ENCODE measurements at regions of chr13 and their contacts with region 1.

Region 1: DNA sequence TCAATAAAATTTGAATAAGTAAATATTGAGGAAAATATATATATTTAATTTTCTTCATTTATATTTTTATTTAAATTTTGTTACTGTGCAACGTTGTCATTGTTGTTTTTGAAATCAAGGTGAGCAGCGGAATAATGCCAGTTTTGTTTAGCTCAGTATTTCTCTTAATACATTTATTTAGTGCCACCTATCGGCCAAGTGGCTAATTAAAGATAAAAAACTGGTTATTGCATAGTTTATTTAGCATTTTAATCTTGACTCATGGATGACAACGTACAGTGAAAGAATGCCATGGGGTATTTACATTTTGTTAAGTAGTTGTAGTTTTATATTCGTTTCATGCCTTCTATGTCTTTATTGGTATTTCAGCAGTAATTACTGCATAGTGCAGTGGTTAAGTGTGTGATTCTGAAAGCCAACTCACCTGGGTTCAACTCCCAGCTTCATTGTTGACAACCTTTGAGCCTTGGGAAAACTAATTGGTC is 265.9 kb downstream of the MYO16 start:
- DNase-seq: no peak
- H3K4me3 Mint-ChIP-seq: no peak overlapping the region
- H3K27ac Mint-ChIP-seq: no peak overlapping the region
- H3K4me1 Mint-ChIP-seq: peaks cover 8% of the 10 kb centered on the region
- H3K27me3 Mint-ChIP-seq: peaks cover 3% of the 10 kb centered on the region

Region 2: GRCh38 chr13:108176685-108177274 is 718.5 kb before region 1 on chr13:
- CTCF ChIA-PET with region 1: no interaction called
- intact Hi-C with region 1: loop called (anchors 2 kb)
- DNase-seq: peak; percentile 75
- H3K4me3 Mint-ChIP-seq: no peak overlapping the region
- H3K27ac Mint-ChIP-seq: no peak overlapping the region
- H3K4me1 Mint-ChIP-seq: no peaks in the 10 kb centered on the region
- H3K27me3 Mint-ChIP-seq: no peaks in the 10 kb centered on the region

Region 3: GRCh38 chr13:108269601-108270328 is 625.5 kb before region 1 on chr13 and contains the start of gene TNFSF13B:
- CTCF ChIA-PET with region 1: interaction called, 3 read pairs
- intact Hi-C with region 1: loop called (anchors 2 kb)
- DNase-seq: peak; percentile 68
- H3K4me3 Mint-ChIP-seq: peak within 1 kb of the TSS; percentile 75
- H3K27ac Mint-ChIP-seq: peak within 1 kb of the TSS; percentile 81
- H3K4me1 Mint-ChIP-seq: peaks cover 55% of the 10 kb centered on the region
- H3K27me3 Mint-ChIP-seq: no peaks in the 10 kb centered on the region
- total RNA-seq, gene TNFSF13B: 2.0 to 2.6 TPM

Region 4: DNA sequence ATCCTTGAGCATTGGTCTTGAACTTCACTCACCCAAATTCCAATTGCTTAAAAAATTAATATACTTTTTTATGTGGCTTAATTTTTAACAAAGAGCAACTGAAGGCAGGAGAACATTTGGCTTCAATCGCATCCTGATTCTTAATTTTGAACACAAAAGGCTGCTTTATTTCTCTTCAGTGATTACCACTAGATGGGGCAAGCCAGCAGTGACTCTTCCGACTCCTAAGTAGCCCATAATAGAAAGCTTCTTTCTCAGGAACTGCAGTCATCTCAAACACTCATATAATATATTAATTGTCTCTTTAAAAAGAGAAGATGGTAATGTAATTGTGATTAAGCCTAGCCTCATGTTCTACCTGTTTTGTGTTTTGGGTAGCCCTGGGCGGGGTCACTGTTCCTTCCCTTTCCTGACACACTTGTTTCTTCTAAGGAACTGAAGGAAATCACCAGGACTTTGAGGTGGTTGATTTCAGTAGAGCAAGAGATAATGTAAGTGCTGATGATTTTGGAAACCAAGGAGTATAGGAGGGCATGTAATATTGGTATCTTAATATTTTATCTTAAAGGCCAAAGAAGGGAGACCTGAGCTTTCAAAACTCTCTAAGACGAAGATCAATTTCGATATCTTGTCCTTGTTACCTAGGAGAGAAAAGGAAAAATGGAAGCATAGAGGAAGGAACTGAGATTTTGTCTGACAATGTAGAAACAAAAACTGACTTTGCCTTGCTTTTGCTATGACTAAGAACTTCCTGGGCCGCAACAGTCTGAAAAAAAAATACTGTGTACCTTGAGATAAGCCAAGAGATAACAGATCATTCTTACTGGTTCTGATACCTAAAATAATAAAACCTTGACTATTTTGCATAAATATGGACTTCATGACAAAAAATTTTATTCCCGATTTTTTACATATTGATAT is 552.6 kb before region 1 on chr13:
- CTCF ChIA-PET with region 1: interaction called, 6 read pairs
- intact Hi-C with region 1: loop called (anchors 1 kb)
- DNase-seq: peak; percentile 28
- H3K4me3 Mint-ChIP-seq: peak overlapping the region; percentile 4
- H3K27ac Mint-ChIP-seq: peak overlapping the region; percentile 56
- H3K4me1 Mint-ChIP-seq: peaks cover 24% of the 10 kb centered on the region
- H3K27me3 Mint-ChIP-seq: no peaks in the 10 kb centered on the region

Region 5: GRCh38 chr13:108609353-108609752 is 285.9 kb before region 1 on chr13:
- CTCF ChIA-PET with region 1: interaction called, 3 read pairs
- intact Hi-C with region 1: loop called (anchors 1 kb)
- DNase-seq: no peak
- H3K4me3 Mint-ChIP-seq: no peak overlapping the region
- H3K27ac Mint-ChIP-seq: no peak overlapping the region
- H3K4me1 Mint-ChIP-seq: no peaks in the 10 kb centered on the region
- H3K27me3 Mint-ChIP-seq: peaks cover 4% of the 10 kb centered on the region